Vagina (tissue), 2 donors: ENCODE measurements at regions of chr2 and their contacts with region 1.

Region 1: GRCh38 chr2:43993437-43993836 is 2.4 kb downstream of the LRPPRC start:
- DNase-seq: no peak
- H3K4me3 ChIP-seq: no peak overlapping the region
- H3K27ac ChIP-seq: no peak overlapping the region
- H3K4me1 ChIP-seq: peaks cover 43% of the 10 kb centered on the region
- H3K27me3 ChIP-seq: no peaks in the 10 kb centered on the region
- CTCF ChIP-seq: no peak
- POLR2A ChIP-seq: no peak

Region 2: GRCh38 chr2:44061876-44062275 is 68.4 kb after region 1 on chr2:
- intact Hi-C with region 1: no loop called
- DNase-seq: no peak
- H3K4me3 ChIP-seq: no peak overlapping the region
- H3K27ac ChIP-seq: no peak overlapping the region
- H3K4me1 ChIP-seq: no peaks in the 10 kb centered on the region
- H3K27me3 ChIP-seq: no peaks in the 10 kb centered on the region
- CTCF ChIP-seq: no peak
- POLR2A ChIP-seq: no peak

Region 3: GRCh38 chr2:45778720-45779171 is 1785.3 kb after region 1 on chr2:
- intact Hi-C with region 1: loop called (anchors 5 kb)
- DNase-seq: no peak
- H3K4me3 ChIP-seq: no peak overlapping the region
- H3K27ac ChIP-seq: no peak overlapping the region
- H3K4me1 ChIP-seq: peaks cover 18% of the 10 kb centered on the region
- H3K27me3 ChIP-seq: no peaks in the 10 kb centered on the region
- CTCF ChIP-seq: peak in 2 of 3 experiments; percentile 35 to 75
- POLR2A ChIP-seq: no peak